ENCODE measurements at regions of chr10 and their contacts with region 1.

Region 1: DNA sequence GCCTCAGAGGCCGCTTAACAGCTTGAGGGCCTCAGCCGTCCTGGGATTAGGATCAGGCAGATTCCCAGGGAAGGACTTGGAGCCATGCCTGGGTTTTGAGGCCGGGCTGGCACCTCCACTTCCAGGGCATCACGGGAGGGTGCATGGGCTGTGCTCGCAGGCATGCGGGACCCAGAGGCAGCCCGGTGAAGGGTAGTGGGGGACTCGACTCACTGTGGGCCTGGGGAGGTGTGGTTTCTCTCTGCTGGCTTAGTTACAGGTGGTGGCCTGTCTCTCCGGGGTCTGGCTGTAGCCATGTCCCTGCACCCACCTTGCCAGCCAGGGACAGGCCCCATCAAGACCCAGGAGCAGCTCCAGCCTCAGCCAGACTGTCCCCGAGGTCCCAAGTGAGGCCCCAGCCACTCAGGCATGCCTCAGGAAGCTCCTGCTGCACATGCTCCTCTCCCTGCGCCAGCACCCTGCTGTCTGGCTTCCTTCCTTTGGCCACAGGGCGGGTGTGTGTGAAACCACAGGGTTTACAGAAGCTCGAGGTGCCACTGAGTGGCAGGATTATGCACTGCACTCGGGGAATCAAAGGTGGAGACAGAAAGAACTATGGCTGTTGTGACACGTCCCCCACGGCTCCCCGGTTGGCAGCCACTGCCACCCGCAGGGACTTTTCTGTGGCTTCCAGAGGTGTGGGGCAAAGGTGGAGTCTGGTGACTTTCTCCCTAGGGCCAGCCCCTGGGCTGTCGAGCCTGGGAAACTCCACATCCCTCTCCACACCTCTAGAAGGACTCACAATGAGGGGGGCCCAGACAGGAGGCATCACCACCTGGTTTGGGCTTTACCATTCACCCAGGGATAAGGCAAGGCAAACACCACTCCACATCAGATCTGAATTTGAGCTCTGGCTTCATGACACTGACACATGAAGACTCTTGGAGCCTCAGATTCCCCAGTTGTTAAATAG is 19.7 kb downstream of the GOLGA7B start:
- DNase-seq: peak; percentile 80
- ATAC-seq: peak; percentile 91

Region 2: GRCh38 chr10:97759158-97759887 is 110.0 kb before region 1 on chr10:
- intact Hi-C with region 1: loop called (anchors 1 kb)
- DNase-seq: peak; percentile 77
- ATAC-seq: peak; percentile 72

Region 3: DNA sequence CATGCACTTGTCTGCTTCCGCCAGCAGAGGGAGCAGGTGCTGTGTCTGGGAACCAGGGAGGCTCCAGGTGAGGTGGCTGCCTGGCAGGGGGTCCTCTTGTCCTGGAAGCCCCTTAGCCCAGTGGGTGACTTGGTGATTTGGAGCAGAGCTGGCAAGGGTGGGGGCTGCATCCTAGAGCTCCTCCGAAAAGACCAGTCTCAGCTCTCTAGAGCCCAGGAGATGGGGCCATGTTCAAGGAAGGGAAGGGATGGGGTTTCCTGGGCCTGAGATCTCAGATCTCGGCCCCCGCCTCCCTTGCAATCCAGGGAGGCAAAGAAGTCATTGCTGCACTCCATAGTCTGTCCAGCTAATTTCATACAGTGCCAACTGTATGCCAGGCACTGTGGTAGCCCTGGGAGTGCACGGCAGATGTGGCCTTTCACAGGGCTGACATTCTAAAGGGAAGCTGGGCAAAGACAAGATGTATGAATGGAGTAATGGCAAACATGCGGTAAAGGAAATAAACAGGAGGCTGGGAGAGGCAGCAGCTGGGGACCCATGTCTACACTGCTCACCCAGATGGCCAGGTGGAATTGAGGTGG is 77.1 kb before region 1 on chr10:
- intact Hi-C with region 1: loop called (anchors 1 kb)
- DNase-seq: no peak
- ATAC-seq: peak; percentile 40

Region 4: GRCh38 chr10:98055875-98056516 is 186.6 kb after region 1 on chr10:
- intact Hi-C with region 1: no loop called
- DNase-seq: no peak
- ATAC-seq: no peak

Measured in Right ventricle myocardium inferior (tissue), 1 donor.